H1 (cell line): ENCODE measurements at regions of chr2 and their contacts with region 1.

Region 1: DNA sequence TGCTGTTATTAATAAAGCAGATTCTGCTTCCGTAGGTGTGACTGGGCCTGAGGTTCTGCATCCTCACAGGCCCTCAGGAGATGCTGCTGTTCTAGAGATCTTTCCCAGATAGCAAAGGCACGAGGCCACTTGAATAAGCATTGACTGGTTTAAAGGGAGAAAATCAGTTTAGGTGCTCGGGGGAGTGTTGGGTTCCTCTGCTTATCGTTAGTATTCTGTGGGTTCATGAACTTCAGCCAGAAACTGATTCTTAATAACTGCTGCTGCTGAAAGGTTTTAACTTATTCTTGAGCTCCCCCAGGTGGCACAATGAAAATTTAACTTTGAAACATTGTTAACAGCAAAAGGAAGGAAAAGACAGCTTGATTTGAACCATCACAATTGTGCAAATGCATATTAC is 56.9 kb downstream of the ITGA6 start:
- DNase-seq: no peak
- H3K4me3 ChIP-seq: no peak overlapping the region
- H3K27ac ChIP-seq: no peak overlapping the region
- H3K4me1 ChIP-seq: 0 out of 7 replicates have a peak, but pooled peaks cover 0 to 1% (median 0%) of the 10 kb centered on the region in 4 experiments
- H3K27me3 ChIP-seq: no peaks in the 10 kb centered on the region
- CTCF ChIP-seq: no peak
- EP300 ChIP-seq: no peak
- POLR2A ChIP-seq: no peak
- RAD21 ChIP-seq: peak; percentile 48 to 49

Region 2: GRCh38 chr2:172172513-172173173 is 311.6 kb before region 1 on chr2:
- CTCF ChIA-PET with region 1: interaction called, 19 read pairs
- POLR2A ChIA-PET with region 1: no interaction called
- DNase-seq: peak; percentile 58 to 93
- H3K4me3 ChIP-seq: peak overlapping the region; percentile 35 to 66 (median 58)
- H3K27ac ChIP-seq: no peak overlapping the region
- H3K4me1 ChIP-seq: peaks cover 2 to 11% (median 9%) of the 10 kb centered on the region in 4 experiments; a peak in 5 of 7 replicates
- H3K27me3 ChIP-seq: peaks cover 0 to 2% (median 0%) of the 10 kb centered on the region in 4 experiments; a peak in 1 of 7 replicates
- CTCF ChIP-seq: peak; percentile 83 to 97 (median 84)
- EP300 ChIP-seq: 0 out of 3 replicates have a peak, but pooled peaks of 1 of the 2 experiments have one; percentile 22
- POLR2A ChIP-seq: peak in 1 of 2 experiments; percentile 51; a peak in 1 of 3 replicates
- RAD21 ChIP-seq: peak; percentile 97 to 99

Region 3: GRCh38 chr2:172200495-172201085 is 283.7 kb before region 1 on chr2:
- CTCF ChIA-PET with region 1: interaction called, 12 read pairs
- POLR2A ChIA-PET with region 1: no interaction called
- DNase-seq: peak in 1 of 2 experiments; percentile 79
- H3K4me3 ChIP-seq: no peak overlapping the region
- H3K27ac ChIP-seq: no peak overlapping the region
- H3K4me1 ChIP-seq: peaks cover 0 to 8% (median 0%) of the 10 kb centered on the region in 4 experiments; a peak in 2 of 7 replicates
- H3K27me3 ChIP-seq: no peaks in the 10 kb centered on the region
- CTCF ChIP-seq: peak in 2 of 3 experiments; percentile 34 to 69; a peak in 2 of 4 replicates
- EP300 ChIP-seq: no peak
- POLR2A ChIP-seq: no peak
- RAD21 ChIP-seq: peak; percentile 69 to 76

Region 4: DNA sequence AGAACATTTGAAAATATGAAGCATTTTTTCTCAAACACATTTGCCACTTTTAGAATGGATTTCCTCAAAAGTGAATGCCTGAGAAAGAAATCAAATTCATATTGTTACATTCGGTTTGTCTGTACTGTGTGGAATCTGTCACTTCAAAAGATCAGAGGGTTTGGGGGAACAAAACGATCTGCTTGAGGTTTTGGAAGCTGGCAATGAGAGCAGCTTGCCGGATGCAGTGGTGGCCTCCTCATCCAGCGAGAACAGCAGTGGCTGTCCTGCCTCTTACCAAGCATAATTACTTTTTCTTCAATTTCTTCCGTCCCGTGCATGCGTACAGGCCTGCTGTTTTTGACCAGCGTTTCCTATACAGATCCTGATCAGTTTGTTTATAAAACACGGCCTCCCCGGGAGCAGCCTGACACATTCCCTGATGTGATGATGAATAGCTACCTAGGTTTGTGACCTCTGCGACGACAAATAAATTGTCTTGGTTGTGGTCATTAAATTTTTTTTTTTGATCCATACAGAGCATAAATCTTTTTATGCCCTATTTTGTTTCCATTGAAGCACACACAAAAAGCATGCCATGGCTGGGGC is 11.7 kb before region 1 on chr2:
- CTCF ChIA-PET with region 1: interaction called, 19 read pairs
- POLR2A ChIA-PET with region 1: no interaction called
- DNase-seq: no peak
- H3K4me3 ChIP-seq: no peak overlapping the region
- H3K27ac ChIP-seq: no peak overlapping the region
- H3K4me1 ChIP-seq: no peaks in the 10 kb centered on the region
- H3K27me3 ChIP-seq: no peaks in the 10 kb centered on the region
- CTCF ChIP-seq: no peak
- EP300 ChIP-seq: no peak
- POLR2A ChIP-seq: no peak
- RAD21 ChIP-seq: no peak

Region 5: GRCh38 chr2:172555522-172556283 is 71.5 kb after region 1 on chr2 and contains the start of gene PDK1:
- CTCF ChIA-PET with region 1: no interaction called
- POLR2A ChIA-PET with region 1: no interaction called
- DNase-seq: peak; percentile 43 to 91
- H3K4me3 ChIP-seq: peak within 1 kb of the TSS; percentile 71 to 87 (median 80)
- H3K27ac ChIP-seq: peak within 1 kb of the TSS; percentile 94
- H3K4me1 ChIP-seq: peaks cover 5 to 23% (median 16%) of the 10 kb centered on the region in 4 experiments; a peak in 6 of 7 replicates
- H3K27me3 ChIP-seq: no peaks in the 10 kb centered on the region
- CTCF ChIP-seq: no peak
- EP300 ChIP-seq: no peak
- POLR2A ChIP-seq: peak; percentile 91 to 99
- RAD21 ChIP-seq: no peak
- total RNA-seq, gene PDK1: 18.2 and 18.7 TPM in 2 replicates

Region 6: DNA sequence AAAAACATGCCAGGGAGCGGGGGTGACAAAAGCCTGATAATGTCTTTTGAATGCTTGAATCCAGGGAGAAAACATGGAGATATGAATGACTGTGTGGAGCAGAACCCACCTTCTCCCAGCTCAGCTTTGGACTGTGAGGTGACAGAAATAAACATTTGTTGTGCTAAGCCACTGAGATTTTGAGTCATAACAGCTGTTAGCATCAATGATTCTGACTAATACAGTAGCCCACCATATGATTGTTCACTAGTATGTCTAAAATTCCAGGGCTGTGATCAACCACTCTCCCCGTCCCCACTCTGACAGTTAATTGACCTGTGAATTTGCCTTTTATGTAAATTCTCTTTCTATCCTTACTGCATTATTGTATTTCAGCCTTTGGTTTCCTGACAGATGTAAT is 140.7 kb after region 1 on chr2:
- CTCF ChIA-PET with region 1: no interaction called
- POLR2A ChIA-PET with region 1: no interaction called
- DNase-seq: no peak
- H3K4me3 ChIP-seq: no peak overlapping the region
- H3K27ac ChIP-seq: no peak overlapping the region
- H3K4me1 ChIP-seq: no peaks in the 10 kb centered on the region
- H3K27me3 ChIP-seq: no peaks in the 10 kb centered on the region
- CTCF ChIP-seq: no peak
- EP300 ChIP-seq: no peak
- POLR2A ChIP-seq: no peak
- RAD21 ChIP-seq: no peak